Endothelial cell of umbilical vein (primary cell): ENCODE measurements at regions of chr9 and their contacts with region 1.

Region 1: GRCh38 chr9:83980395-83981125 is at the start of gene RMI1:
- DNase-seq: peak; percentile 97
- H3K4me3 ChIP-seq: peak within 1 kb of the TSS; percentile 67 to 96 (median 90)
- H3K27ac ChIP-seq: peak within 1 kb of the TSS; percentile 95
- H3K4me1 ChIP-seq: peaks cover 13% of the 10 kb centered on the region
- H3K27me3 ChIP-seq: no peaks in the 10 kb centered on the region
- CTCF ChIP-seq: no peak
- POLR2A ChIP-seq: peak; percentile 95
- total RNA-seq, gene RMI1: 11.4 and 11.5 TPM in 2 replicates

Region 2: GRCh38 chr9:83920927-83921707 is 59.4 kb before region 1 on chr9 and contains the start of gene KIF27:
- CTCF ChIA-PET with region 1: no interaction called
- POLR2A ChIA-PET with region 1: no interaction called
- dilution Hi-C with region 1: no loop called
- intact Hi-C with region 1: loop called (anchors 2 kb)
- DNase-seq: peak; percentile 98
- H3K4me3 ChIP-seq: peak within 1 kb of the TSS; percentile 41 to 78 (median 69)
- H3K27ac ChIP-seq: peak within 1 kb of the TSS; percentile 69
- H3K4me1 ChIP-seq: peaks cover 10% of the 10 kb centered on the region
- H3K27me3 ChIP-seq: no peaks in the 10 kb centered on the region
- CTCF ChIP-seq: peak; percentile 8 to 36
- POLR2A ChIP-seq: peak; percentile 93
- total RNA-seq, gene KIF27: 3.2 and 3.5 TPM in 2 replicates

Region 3: GRCh38 chr9:83937911-83938323 is 42.6 kb before region 1 on chr9:
- CTCF ChIA-PET with region 1: no interaction called
- POLR2A ChIA-PET with region 1: no interaction called
- dilution Hi-C with region 1: no loop called
- intact Hi-C with region 1: loop called (anchors 1 kb)
- DNase-seq: peak; percentile 70
- H3K4me3 ChIP-seq: no peak overlapping the region
- H3K27ac ChIP-seq: no peak overlapping the region
- H3K4me1 ChIP-seq: peaks cover 7% of the 10 kb centered on the region
- H3K27me3 ChIP-seq: no peaks in the 10 kb centered on the region
- CTCF ChIP-seq: peak; percentile 48 to 49
- POLR2A ChIP-seq: no peak

Region 4: DNA sequence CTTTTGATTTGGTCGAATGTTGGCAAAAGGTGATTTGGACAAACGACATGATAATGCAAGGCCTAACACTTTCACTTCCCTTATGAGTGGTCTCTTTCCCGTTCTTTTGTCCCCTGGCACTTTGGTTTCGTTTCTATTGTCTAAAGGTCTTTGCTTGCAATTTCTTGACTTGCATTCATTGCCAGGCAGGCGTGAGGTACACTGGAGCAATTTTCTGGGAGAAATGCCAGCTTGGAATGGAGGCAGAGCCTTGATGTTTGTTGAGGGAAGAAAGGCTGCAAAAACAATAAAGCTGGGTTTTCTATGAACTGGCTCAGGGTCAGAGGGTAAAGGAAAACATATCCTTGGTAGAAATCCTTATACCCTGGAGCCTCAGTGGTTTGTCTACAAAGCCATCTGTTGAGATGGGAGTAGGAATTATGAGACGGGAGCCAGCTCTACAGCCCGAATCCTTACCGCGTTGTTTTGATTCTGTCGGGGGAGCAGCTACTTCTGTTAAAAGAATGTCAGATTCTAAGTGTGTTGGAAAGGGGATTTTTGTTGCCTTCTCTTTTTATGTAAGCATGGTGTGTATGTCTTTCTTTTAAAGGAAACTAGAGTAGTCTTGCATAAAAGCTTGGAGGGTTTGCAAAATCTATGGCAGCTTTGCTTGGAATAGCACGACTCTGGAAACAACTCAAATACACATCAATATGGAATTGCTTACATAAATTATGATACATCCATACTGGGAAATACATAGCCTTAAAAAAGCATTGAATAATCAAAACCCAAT is 158.9 kb after region 1 on chr9:
- CTCF ChIA-PET with region 1: no interaction called
- POLR2A ChIA-PET with region 1: no interaction called
- dilution Hi-C with region 1: no loop called
- intact Hi-C with region 1: loop called (anchors 2 kb)
- DNase-seq: peak; percentile 98
- H3K4me3 ChIP-seq: peak overlapping the region in 1 of 3 experiments; percentile 39
- H3K27ac ChIP-seq: peak overlapping the region; percentile 59
- H3K4me1 ChIP-seq: peaks cover 19% of the 10 kb centered on the region
- H3K27me3 ChIP-seq: no peaks in the 10 kb centered on the region
- CTCF ChIP-seq: no peak
- POLR2A ChIP-seq: no peak